CD8-positive, alpha-beta T cell (primary cell): ENCODE measurements at regions of chr14 and their contacts with region 1.

Region 1: DNA sequence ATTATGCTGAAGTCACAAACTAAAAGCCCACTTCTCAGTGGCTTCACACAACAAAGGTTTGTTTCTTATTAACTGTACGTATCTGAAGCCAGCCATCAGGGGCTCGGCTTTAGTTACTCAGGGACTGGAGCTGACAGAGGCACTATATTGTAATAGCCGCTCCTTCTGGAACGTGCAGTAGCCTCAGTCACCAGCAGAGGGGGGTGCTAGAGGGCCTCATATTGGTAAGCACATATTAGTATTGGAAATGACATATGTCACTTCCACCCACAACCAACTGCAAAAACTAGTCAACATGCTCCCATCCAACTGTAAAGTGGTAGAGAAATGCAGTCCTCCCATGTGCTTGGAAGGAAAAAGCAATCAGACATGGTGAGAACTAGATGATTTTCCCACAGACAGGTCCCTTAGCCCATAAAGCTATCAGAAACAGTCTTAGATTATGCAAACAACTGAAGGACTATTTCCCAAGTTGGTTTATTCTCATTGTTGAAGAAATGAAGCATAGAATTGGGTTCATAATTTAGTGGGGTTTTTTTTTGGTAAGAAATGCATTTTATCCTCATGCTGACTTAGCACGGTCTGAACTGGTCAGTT is 183.6 kb upstream of the G2E3 start:
- DNase-seq: peak; percentile 4 to 62 (median 48)
- ATAC-seq: peak; percentile 81
- H3K4me3 ChIP-seq: no peak overlapping the region
- H3K4me3 Mint-ChIP-seq: no peak overlapping the region
- H3K27ac ChIP-seq: no peak overlapping the region
- H3K27ac Mint-ChIP-seq: no peak overlapping the region
- H3K4me1 ChIP-seq: no peaks in the 10 kb centered on the region
- H3K4me1 Mint-ChIP-seq: no peaks in the 10 kb centered on the region
- H3K27me3 ChIP-seq: no peaks in the 10 kb centered on the region
- H3K27me3 Mint-ChIP-seq: peaks cover 15% of the 10 kb centered on the region
- CTCF ChIP-seq: peak; percentile 62

Region 2: GRCh38 chr14:30521899-30522736 is 146.7 kb after region 1 on chr14:
- CTCF ChIA-PET with region 1: interaction called, 20 read pairs
- POLR2A ChIA-PET with region 1: no interaction called
- intact Hi-C with region 1: loop called in 1 of 2 experiments (anchors 1 kb)
- DNase-seq: peak in 2 of 9 experiments; percentile 54 to 64
- ATAC-seq: peak; percentile 69
- H3K4me3 ChIP-seq: no peak overlapping the region
- H3K4me3 Mint-ChIP-seq: peak overlapping the region; percentile 19
- H3K27ac ChIP-seq: no peak overlapping the region
- H3K27ac Mint-ChIP-seq: peak overlapping the region; percentile 34
- H3K4me1 ChIP-seq: peaks cover 5% of the 10 kb centered on the region
- H3K4me1 Mint-ChIP-seq: peaks cover 11% of the 10 kb centered on the region
- H3K27me3 ChIP-seq: no peaks in the 10 kb centered on the region
- H3K27me3 Mint-ChIP-seq: no peaks in the 10 kb centered on the region
- CTCF ChIP-seq: peak; percentile 87

Region 3: GRCh38 chr14:30610787-30611343 is 235.5 kb after region 1 on chr14:
- CTCF ChIA-PET with region 1: no interaction called
- POLR2A ChIA-PET with region 1: no interaction called
- intact Hi-C with region 1: loop called in 1 of 2 experiments (anchors 10 kb)
- DNase-seq: peak in 5 of 9 experiments; percentile 18 to 47 (median 27)
- ATAC-seq: no peak
- H3K4me3 ChIP-seq: no peak overlapping the region
- H3K4me3 Mint-ChIP-seq: no peak overlapping the region
- H3K27ac ChIP-seq: no peak overlapping the region
- H3K27ac Mint-ChIP-seq: no peak overlapping the region
- H3K4me1 ChIP-seq: no peaks in the 10 kb centered on the region
- H3K4me1 Mint-ChIP-seq: no peaks in the 10 kb centered on the region
- H3K27me3 ChIP-seq: no peaks in the 10 kb centered on the region
- H3K27me3 Mint-ChIP-seq: no peaks in the 10 kb centered on the region
- CTCF ChIP-seq: no peak

Region 4: GRCh38 chr14:30906752-30907658 is 531.6 kb after region 1 on chr14:
- CTCF ChIA-PET with region 1: no interaction called
- POLR2A ChIA-PET with region 1: no interaction called
- intact Hi-C with region 1: loop called in 1 of 2 experiments (anchors 5 kb)
- DNase-seq: peak in 2 of 9 experiments; percentile 10 to 31
- ATAC-seq: no peak
- H3K4me3 ChIP-seq: no peak overlapping the region
- H3K4me3 Mint-ChIP-seq: no peak overlapping the region
- H3K27ac ChIP-seq: no peak overlapping the region
- H3K27ac Mint-ChIP-seq: no peak overlapping the region
- H3K4me1 ChIP-seq: no peaks in the 10 kb centered on the region
- H3K4me1 Mint-ChIP-seq: no peaks in the 10 kb centered on the region
- H3K27me3 ChIP-seq: no peaks in the 10 kb centered on the region
- H3K27me3 Mint-ChIP-seq: no peaks in the 10 kb centered on the region
- CTCF ChIP-seq: no peak